Activated B cell treated with CpG ODN at 0.5 μM for 24 hours (primary cell): ENCODE measurements at regions of chr5 and their contacts with region 1.

Region 1: DNA sequence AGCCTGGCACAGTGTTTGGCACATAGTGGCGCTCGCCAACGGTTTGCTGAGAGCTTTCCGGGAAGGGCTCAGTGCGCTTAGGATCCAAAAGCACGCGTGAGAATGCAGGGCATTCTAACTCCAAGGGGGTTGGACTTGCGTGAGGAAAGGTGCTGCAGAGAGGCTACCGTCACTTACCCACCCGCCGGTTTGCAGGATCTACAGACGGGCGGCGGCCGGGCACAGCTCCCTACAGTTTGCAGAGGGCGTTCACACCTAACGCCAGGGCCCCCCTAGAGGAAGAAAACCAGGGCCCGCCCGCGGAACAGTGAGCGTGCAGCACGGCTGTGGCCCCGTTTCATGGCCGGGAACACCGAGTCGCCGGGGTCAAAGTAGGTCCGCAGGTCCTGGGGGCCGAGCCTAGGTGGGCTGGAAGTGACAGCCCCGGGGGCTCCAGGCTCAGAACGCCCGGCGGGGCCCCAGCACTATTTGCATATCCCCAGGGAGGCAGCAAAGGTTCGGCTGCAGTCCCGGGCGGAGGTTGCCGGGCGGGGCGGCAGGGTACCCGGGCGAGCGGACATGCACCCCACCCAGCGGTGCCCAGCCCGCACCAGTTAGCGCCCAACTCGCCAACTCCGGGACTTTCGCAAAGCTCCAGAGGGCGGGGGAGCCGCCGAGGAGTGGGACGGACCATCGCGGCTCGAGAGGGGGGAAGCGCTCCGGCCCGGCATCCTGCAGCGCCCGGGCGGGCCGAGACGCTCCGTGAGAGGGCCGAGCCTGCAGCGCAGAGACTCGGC is 526 bp upstream of the GALNT10 start:
- DNase-seq: peak; percentile 84
- ATAC-seq: peak; percentile 86
- H3K4me3 Mint-ChIP-seq: peak overlapping the region; percentile 86
- H3K27ac Mint-ChIP-seq: peak overlapping the region; percentile 72
- H3K4me1 Mint-ChIP-seq: peaks cover 50% of the 10 kb centered on the region
- H3K27me3 Mint-ChIP-seq: no peaks in the 10 kb centered on the region
- CTCF ChIP-seq: no peak

Region 2: DNA sequence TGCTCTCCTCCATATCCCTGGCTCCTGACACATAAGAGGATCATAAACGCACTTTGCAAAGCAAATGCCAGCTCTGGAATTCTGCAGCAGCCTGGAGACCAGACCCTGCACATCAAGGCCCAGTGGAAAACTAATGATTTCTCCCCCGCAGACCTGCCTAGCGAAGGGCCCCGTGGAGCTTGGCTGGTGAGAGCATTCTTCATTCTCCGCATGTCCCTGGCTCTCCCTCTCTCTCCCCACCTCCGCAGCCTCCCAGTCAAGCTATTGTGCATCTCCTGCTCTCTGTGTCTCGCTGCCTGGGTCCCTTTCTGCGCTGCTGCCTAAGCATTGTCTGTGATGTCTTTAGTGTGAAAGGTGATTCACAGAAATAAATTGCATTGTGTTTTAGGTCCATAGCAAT is 652.8 kb before region 1 on chr5:
- CTCF ChIA-PET with region 1: no interaction called
- POLR2A ChIA-PET with region 1: no interaction called
- intact Hi-C with region 1: no loop called
- DNase-seq: no peak
- ATAC-seq: no peak
- H3K4me3 Mint-ChIP-seq: no peak overlapping the region
- H3K27ac Mint-ChIP-seq: no peak overlapping the region
- H3K4me1 Mint-ChIP-seq: no peaks in the 10 kb centered on the region
- H3K27me3 Mint-ChIP-seq: no peaks in the 10 kb centered on the region
- CTCF ChIP-seq: no peak

Region 3: GRCh38 chr5:154202379-154203260 is 12.6 kb after region 1 on chr5:
- CTCF ChIA-PET with region 1: interaction called, 4 read pairs
- POLR2A ChIA-PET with region 1: interaction called, 18 read pairs
- intact Hi-C with region 1: no loop called
- DNase-seq: no peak
- ATAC-seq: peak; percentile 86
- H3K4me3 Mint-ChIP-seq: peak overlapping the region; percentile 44
- H3K27ac Mint-ChIP-seq: peak overlapping the region; percentile 47
- H3K4me1 Mint-ChIP-seq: peaks cover 32% of the 10 kb centered on the region
- H3K27me3 Mint-ChIP-seq: no peaks in the 10 kb centered on the region
- CTCF ChIP-seq: no peak

Region 4: GRCh38 chr5:154238776-154239481 is 48.9 kb after region 1 on chr5:
- CTCF ChIA-PET with region 1: interaction called, 3 read pairs
- POLR2A ChIA-PET with region 1: interaction called, 36 read pairs
- intact Hi-C with region 1: loop called (anchors 1 kb)
- DNase-seq: peak; percentile 50
- ATAC-seq: peak; percentile 97
- H3K4me3 Mint-ChIP-seq: peak overlapping the region; percentile 25
- H3K27ac Mint-ChIP-seq: peak overlapping the region; percentile 43
- H3K4me1 Mint-ChIP-seq: peaks cover 67% of the 10 kb centered on the region
- H3K27me3 Mint-ChIP-seq: no peaks in the 10 kb centered on the region
- CTCF ChIP-seq: no peak

Region 5: GRCh38 chr5:154331924-154332323 is 141.9 kb after region 1 on chr5:
- CTCF ChIA-PET with region 1: no interaction called
- POLR2A ChIA-PET with region 1: no interaction called
- intact Hi-C with region 1: no loop called
- DNase-seq: no peak
- ATAC-seq: no peak
- H3K4me3 Mint-ChIP-seq: no peak overlapping the region
- H3K27ac Mint-ChIP-seq: no peak overlapping the region
- H3K4me1 Mint-ChIP-seq: peaks cover 4% of the 10 kb centered on the region
- H3K27me3 Mint-ChIP-seq: no peaks in the 10 kb centered on the region
- CTCF ChIP-seq: no peak

Region 6: GRCh38 chr5:154384480-154385235 is 194.7 kb after region 1 on chr5:
- CTCF ChIA-PET with region 1: no interaction called
- POLR2A ChIA-PET with region 1: interaction called, 12 read pairs
- intact Hi-C with region 1: loop called (anchors 1 kb)
- DNase-seq: peak; percentile 28
- ATAC-seq: peak; percentile 87
- H3K4me3 Mint-ChIP-seq: peak overlapping the region; percentile 79
- H3K27ac Mint-ChIP-seq: peak overlapping the region; percentile 85
- H3K4me1 Mint-ChIP-seq: peaks cover 33% of the 10 kb centered on the region
- H3K27me3 Mint-ChIP-seq: no peaks in the 10 kb centered on the region
- CTCF ChIP-seq: no peak

Region 7: GRCh38 chr5:154445422-154446182 is 255.6 kb after region 1 on chr5 and contains the start of gene SAP30L:
- CTCF ChIA-PET with region 1: no interaction called
- POLR2A ChIA-PET with region 1: interaction called, 4 read pairs
- intact Hi-C with region 1: loop called (anchors 1 kb)
- DNase-seq: peak; percentile 97
- ATAC-seq: peak; percentile 96
- H3K4me3 Mint-ChIP-seq: peak within 1 kb of the TSS; percentile 99
- H3K27ac Mint-ChIP-seq: peak within 1 kb of the TSS; percentile 90
- H3K4me1 Mint-ChIP-seq: peaks cover 47% of the 10 kb centered on the region
- H3K27me3 Mint-ChIP-seq: no peaks in the 10 kb centered on the region
- CTCF ChIP-seq: no peak
- total RNA-seq, gene SAP30L: 26.4 and 28.9 TPM in 2 replicates

Region 8: DNA sequence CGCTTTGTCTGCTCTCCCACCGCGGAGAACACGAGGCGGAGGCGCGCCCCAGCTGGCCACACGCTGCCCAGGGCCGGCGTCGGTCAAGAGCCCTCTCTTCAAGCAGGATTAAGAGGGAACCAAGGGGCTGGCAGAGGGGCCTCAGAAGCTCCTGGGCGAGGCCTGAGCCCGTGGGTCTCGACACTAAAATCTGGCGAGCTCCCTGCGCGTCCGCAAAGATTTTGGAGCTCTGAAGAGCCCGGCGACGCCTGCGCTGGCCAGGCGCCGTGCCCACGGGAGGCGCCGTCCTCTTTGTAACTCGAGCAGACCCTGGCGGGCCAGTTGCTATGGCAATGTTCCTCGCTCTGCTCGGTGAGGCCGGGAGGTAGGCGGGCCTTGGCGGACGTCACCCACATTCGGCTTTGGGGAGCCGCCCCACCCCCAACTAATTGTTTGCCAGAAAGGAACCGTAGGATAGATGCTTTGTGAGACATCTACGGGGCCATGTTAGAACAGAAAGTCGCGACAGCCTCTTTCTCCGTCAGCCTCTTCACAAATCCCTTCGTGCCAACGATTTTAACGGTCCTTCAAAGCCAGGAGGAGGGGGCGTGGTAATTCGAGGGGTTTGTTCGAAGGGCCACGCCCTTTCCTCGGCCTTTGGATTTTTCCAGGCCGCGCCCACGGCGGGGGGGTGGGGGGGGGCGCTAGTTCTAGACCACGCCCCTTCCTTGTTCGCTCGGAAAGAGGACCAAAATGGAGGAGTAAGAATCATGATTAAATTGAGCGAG is 667.7 kb after region 1 on chr5:
- CTCF ChIA-PET with region 1: no interaction called
- POLR2A ChIA-PET with region 1: no interaction called
- intact Hi-C with region 1: loop called (anchors 1 kb)
- DNase-seq: peak; percentile 75
- ATAC-seq: peak; percentile 49
- H3K4me3 Mint-ChIP-seq: peak overlapping the region; percentile 91
- H3K27ac Mint-ChIP-seq: peak overlapping the region; percentile 97
- H3K4me1 Mint-ChIP-seq: peaks cover 42% of the 10 kb centered on the region
- H3K27me3 Mint-ChIP-seq: no peaks in the 10 kb centered on the region
- CTCF ChIP-seq: no peak